Heart right ventricle (tissue), 16 donors: ENCODE measurements at regions of chr11 and their contacts with region 1.

Region 1: DNA sequence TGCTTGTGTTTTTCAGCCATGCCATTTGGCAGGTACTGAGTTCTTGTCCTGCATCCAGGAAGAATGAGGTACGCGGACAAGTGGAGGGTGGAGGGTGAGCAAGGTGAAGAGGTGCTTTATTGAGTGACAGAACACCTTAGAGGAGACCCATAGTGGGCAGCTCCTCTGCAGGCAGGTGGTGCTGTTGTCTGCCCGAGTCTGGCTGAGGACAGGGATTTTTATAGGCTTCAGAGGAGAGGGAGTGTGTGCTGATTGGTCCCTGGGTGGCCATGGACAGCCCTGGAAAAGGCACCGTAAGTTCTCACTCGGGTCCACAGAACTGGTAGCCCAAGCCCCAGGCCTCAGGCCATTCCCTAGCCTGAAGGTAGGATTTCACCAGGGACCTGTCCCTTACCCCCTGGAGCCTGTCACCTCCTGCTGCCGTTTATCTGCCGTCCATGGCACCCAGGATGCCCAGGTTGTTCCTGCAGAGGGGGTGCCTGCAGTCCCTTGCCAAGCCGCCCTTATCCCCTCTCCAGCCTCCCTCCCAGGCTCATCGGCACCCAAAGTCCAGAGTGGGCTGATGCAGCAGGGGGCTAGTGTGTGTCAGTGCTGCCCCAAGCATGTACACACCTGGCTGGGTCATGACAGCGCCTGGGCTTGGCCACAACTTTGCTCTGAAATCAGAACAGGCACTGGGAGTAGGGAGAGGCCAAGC is 213.6 kb downstream of the LRRC4C start:
- DNase-seq: no peak
- ATAC-seq: peak in 6 of 8 donors; percentile 28 to 85 (median 56)
- H3K4me3 ChIP-seq: no peak overlapping the region
- H3K27ac ChIP-seq: no peak overlapping the region
- H3K4me1 ChIP-seq: no peaks in the 10 kb centered on the region
- H3K27me3 ChIP-seq: no peaks in the 10 kb centered on the region
- CTCF ChIP-seq: peak in 5 of 9 donors; percentile 7 to 41 (median 24)

Region 2: GRCh38 chr11:41431784-41432183 is 185.9 kb after region 1 on chr11:
- intact Hi-C with region 1: loop called in 2 of 10 experiments (anchors 5 to 10 kb)
- DNase-seq: no peak
- ATAC-seq: no peak
- H3K4me3 ChIP-seq: no peak overlapping the region
- H3K27ac ChIP-seq: no peak overlapping the region
- H3K4me1 ChIP-seq: no peaks in the 10 kb centered on the region
- H3K27me3 ChIP-seq: no peaks in the 10 kb centered on the region
- CTCF ChIP-seq: peak; percentile 7 to 68 (median 41)

Region 3: DNA sequence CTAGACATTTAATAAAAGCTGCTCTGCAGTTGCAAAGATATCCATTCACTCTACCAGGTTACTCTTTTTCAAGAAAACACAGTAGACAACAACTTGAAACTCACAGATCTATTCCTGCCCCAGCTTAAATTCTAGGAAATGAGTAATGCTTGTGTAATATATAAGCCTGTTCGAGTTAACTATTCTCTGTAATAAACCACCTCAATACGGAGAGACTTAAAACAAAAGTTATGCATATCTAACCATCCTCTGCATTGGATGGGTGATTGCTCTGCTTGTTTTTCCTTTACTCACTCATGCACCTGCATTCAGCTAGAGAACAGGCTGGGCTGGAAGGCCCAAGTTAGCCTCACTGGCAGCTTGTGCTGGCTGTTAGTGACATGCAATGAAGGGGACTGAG is 200.3 kb after region 1 on chr11:
- intact Hi-C with region 1: no loop called
- DNase-seq: no peak
- ATAC-seq: no peak
- H3K4me3 ChIP-seq: no peak overlapping the region
- H3K27ac ChIP-seq: no peak overlapping the region
- H3K4me1 ChIP-seq: no peaks in the 10 kb centered on the region
- H3K27me3 ChIP-seq: no peaks in the 10 kb centered on the region
- CTCF ChIP-seq: no peak